ENCODE measurements at regions of chr14 and their contacts with region 1.

Region 1: GRCh38 chr14:22084393-22085281 is 411.0 kb upstream of the OR4E1 start:
- DNase-seq: no peak
- ATAC-seq: peak; percentile 55

Region 2: DNA sequence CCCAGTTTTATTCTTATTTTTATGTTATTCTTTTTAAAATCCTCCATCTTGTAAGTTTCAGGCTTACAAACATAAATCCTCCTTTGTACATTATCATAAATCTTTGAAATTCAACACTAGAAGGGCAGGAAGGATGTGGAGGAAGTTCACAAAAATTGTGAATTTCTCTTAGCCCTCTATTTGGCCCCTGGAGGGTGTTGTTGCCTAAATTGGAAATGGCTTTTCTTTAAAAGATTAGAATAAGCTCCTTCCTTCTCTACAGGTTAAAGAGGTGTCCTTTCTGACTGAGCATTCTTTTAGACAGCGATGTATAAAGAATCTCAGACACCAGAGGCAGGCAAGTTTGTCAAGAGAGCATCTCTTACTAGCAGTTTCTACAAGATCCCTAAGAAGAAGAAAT is 19.3 kb before region 1 on chr14:
- intact Hi-C with region 1: loop called (anchors 1 kb)
- DNase-seq: no peak
- ATAC-seq: no peak

Region 3: DNA sequence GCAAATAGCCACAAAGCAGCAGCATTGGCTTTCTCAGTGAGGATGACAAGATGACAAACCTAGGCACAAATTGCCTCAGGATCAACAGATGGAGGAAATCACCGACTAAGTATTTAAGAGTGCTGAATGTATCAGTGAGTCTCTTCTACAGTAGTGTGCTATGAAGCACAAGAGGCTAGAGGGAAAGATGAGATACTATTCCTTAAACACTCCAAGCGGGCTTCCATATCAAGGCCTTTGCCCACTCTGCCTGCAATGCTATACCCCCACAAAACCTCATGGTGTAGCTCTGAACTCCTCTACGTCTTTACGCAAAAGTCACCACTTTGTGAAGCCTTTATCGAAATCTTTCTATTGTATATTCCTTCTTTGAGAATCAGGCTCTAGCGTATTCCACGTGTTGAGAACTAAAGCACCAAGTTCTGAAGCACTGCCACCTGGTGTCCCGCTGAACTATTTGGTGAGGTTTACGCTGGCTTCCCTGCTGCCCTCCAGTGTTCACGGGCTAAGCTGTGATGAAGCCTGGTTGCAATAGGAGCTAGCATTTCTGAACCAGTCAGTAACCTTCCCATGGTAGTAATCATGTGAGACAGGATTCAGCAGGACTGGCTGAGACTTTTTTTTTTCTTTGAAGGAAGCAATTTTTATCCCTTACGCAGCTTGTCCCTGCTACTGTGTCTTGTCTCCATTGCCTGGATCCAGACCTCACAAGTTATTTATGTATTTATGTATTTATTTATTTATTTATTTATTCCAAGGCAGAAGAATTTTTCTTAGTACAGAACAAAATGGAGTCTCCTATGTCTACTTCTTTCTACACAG is 15.5 kb after region 1 on chr14:
- intact Hi-C with region 1: loop called (anchors 2 kb)
- DNase-seq: peak; percentile 72
- ATAC-seq: peak; percentile 91

Region 4: GRCh38 chr14:22122227-22122818 is 37.7 kb after region 1 on chr14:
- intact Hi-C with region 1: no loop called
- DNase-seq: no peak
- ATAC-seq: no peak

Measured in Right ventricle myocardium inferior (tissue), 1 donor.